Sigmoid colon (tissue), 7 donors: ENCODE measurements at regions of chr5 and their contacts with region 1.

Region 1: GRCh38 chr5:60546196-60546595 is 153.8 kb downstream of the DEPDC1B start:
- DNase-seq: peak; percentile 77
- H3K4me3 ChIP-seq: no peak overlapping the region
- H3K27ac ChIP-seq: peak overlapping the region; percentile 45 to 81 (median 66)
- H3K4me1 ChIP-seq: peaks cover 0 to 53% (median 38%) of the 10 kb centered on the region in 4 donors
- H3K27me3 ChIP-seq: no peaks in the 10 kb centered on the region
- CTCF ChIP-seq: no peak
- EP300 ChIP-seq: peak in 1 of 4 donors; percentile 38
- POLR2A ChIP-seq: no peak

Region 2: GRCh38 chr5:60487885-60488442 is 58.2 kb before region 1 on chr5:
- intact Hi-C with region 1: loop called (anchors 5 kb)
- DNase-seq: no peak
- H3K4me3 ChIP-seq: peak overlapping the region; percentile 35 to 56 (median 46)
- H3K27ac ChIP-seq: peak overlapping the region; percentile 73 to 84 (median 78)
- H3K4me1 ChIP-seq: peaks cover 0 to 40% (median 15%) of the 10 kb centered on the region in 4 donors
- H3K27me3 ChIP-seq: no peaks in the 10 kb centered on the region
- CTCF ChIP-seq: no peak
- EP300 ChIP-seq: no peak
- POLR2A ChIP-seq: no peak

Region 3: GRCh38 chr5:60507687-60508086 is 38.5 kb before region 1 on chr5:
- intact Hi-C with region 1: loop called (anchors 5 kb)
- DNase-seq: no peak
- H3K4me3 ChIP-seq: no peak overlapping the region
- H3K27ac ChIP-seq: peak overlapping the region; percentile 57 to 89 (median 73)
- H3K4me1 ChIP-seq: peaks cover 0 to 76% (median 63%) of the 10 kb centered on the region in 4 donors
- H3K27me3 ChIP-seq: no peaks in the 10 kb centered on the region
- CTCF ChIP-seq: no peak
- EP300 ChIP-seq: peak in 3 of 4 donors; percentile 70 to 89 (median 87)
- POLR2A ChIP-seq: no peak